HEK293T (cell line): ENCODE measurements at regions of chr11 and their contacts with region 1.

Region 1: GRCh38 chr11:113906038-113906437 is 1.4 kb downstream of the HTR3B start:
- DNase-seq: peak; percentile 77

Region 2: DNA sequence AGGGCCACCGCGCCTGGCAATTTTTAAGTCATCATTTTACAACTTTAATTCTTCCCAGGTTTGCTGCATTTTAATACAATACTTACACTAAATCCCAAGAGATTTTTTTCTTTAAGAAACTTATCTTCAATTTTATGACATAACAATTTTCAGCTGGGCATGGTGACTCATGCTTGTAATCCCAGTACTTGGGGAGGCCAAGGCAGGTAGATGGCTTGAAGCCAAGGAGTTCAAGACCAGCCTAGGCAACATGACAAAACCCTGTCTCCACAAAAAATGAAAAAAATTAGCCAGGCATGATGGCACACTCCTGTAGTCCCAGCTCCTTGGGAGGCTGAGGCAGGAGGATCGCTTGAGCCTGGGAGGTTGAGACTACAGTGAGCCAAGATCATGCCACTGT is 87.6 kb before region 1 on chr11:
- CTCF ChIA-PET with region 1: no interaction called
- POLR2A ChIA-PET with region 1: no interaction called
- DNase-seq: no peak

Region 3: GRCh38 chr11:113862435-113862834 is 43.6 kb before region 1 on chr11:
- CTCF ChIA-PET with region 1: no interaction called
- POLR2A ChIA-PET with region 1: no interaction called
- DNase-seq: no peak

Region 4: GRCh38 chr11:113875234-113876073 is 30.6 kb before region 1 on chr11 and contains the start of gene USP28:
- CTCF ChIA-PET with region 1: no interaction called
- POLR2A ChIA-PET with region 1: interaction called, 10 read pairs
- DNase-seq: peak; percentile 98

Region 5: GRCh38 chr11:114001416-114001815 is 95.4 kb after region 1 on chr11:
- CTCF ChIA-PET with region 1: no interaction called
- POLR2A ChIA-PET with region 1: no interaction called
- DNase-seq: no peak